BJ (cell line): ENCODE measurements at regions of chr2 and their contacts with region 1.

Region 1: DNA sequence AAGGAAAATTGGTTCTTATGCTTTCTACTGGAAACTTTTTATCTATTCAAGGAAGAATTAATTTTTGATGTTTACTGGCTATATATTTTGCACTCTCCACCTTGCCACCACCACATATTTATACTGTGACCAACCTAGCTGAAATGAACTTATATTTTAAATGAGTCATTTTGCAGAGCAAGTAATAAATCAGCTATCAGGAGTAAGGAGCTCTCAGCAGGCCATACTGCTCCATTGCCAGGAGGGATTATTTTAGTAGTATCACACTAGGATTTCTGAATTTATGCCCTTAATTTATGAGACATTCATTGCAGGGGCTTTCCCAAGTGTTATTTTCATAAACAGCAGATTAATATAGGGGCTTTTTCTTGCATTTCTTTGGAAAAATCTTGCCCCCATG is 125.8 kb upstream of the CYP1B1 start:
- DNase-seq: no peak
- H3K4me3 ChIP-seq: no peak overlapping the region
- H3K27me3 ChIP-seq: no peaks in the 10 kb centered on the region
- CTCF ChIP-seq: no peak

Region 2: DNA sequence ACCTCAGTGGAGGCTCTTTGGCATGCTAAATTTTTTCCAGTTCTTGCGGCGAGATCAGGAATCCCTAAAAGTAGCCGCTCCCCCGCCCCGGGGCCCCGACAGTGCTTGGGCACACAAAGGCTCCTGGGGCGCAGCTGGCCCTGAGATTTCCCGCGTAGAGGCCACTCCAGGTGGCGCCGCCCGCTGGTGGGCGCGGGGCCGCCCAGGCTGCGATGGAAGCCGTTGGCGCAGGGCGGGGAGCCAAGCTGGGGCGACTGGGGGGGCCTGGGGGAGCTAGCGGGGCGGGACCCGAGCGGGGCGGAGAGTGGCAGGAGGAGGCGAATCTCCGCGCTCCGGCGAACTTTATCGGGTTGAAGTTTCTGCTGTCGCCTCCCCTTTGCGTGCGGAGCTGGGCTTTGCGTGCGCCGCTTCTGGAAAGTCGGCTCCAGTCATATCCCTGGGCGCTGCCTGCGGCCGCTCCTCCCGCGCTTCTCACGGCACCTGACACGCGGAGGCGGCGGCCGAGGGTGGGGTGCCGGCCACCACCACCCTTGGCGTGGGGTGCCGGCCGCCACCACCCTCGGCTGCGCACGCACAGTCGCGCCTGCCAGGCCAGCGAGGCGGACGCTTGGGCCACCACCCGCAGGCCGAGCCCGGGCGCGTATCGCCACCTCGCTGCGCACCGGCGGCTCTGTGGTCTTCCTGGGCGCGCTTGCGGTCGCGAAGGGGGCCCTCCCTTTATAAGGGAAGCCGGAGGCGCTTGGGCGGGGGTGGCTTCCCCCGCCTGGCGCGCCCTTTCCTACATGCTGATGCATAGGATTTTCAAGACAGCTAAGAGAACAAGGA is 125.0 kb before region 1 on chr2:
- CTCF ChIA-PET with region 1: no interaction called
- POLR2A ChIA-PET with region 1: interaction called, 13 read pairs
- DNase-seq: peak; percentile 66
- H3K4me3 ChIP-seq: peak overlapping the region; percentile 46
- H3K27me3 ChIP-seq: peaks cover 23% of the 10 kb centered on the region
- CTCF ChIP-seq: no peak; the same call in 1 of the 2 replicates

Region 3: GRCh38 chr2:38214209-38214717 is 12.5 kb after region 1 on chr2:
- CTCF ChIA-PET with region 1: no interaction called
- POLR2A ChIA-PET with region 1: no interaction called
- DNase-seq: no peak
- H3K4me3 ChIP-seq: no peak overlapping the region
- H3K27me3 ChIP-seq: peaks cover 7% of the 10 kb centered on the region
- CTCF ChIP-seq: no peak